ENCODE measurements at regions of chr5 and their contacts with region 1.

Region 1: GRCh38 chr5:107673368-107674136 is 2.8 kb upstream of the EFNA5 start:
- DNase-seq: peak; percentile 90 to 95
- H3K4me3 ChIP-seq: peak overlapping the region; percentile 41
- H3K4me1 ChIP-seq: peaks cover 5% of the 10 kb centered on the region
- H3K27me3 ChIP-seq: no peaks in the 10 kb centered on the region

Region 2: GRCh38 chr5:107248066-107248695 is 425.4 kb before region 1 on chr5:
- in situ Hi-C with region 1: loop called (anchors 25 kb)
- DNase-seq: peak; percentile 43 to 87
- H3K4me3 ChIP-seq: no peak overlapping the region
- H3K4me1 ChIP-seq: peaks cover 1% of the 10 kb centered on the region
- H3K27me3 ChIP-seq: no peaks in the 10 kb centered on the region

Region 3: DNA sequence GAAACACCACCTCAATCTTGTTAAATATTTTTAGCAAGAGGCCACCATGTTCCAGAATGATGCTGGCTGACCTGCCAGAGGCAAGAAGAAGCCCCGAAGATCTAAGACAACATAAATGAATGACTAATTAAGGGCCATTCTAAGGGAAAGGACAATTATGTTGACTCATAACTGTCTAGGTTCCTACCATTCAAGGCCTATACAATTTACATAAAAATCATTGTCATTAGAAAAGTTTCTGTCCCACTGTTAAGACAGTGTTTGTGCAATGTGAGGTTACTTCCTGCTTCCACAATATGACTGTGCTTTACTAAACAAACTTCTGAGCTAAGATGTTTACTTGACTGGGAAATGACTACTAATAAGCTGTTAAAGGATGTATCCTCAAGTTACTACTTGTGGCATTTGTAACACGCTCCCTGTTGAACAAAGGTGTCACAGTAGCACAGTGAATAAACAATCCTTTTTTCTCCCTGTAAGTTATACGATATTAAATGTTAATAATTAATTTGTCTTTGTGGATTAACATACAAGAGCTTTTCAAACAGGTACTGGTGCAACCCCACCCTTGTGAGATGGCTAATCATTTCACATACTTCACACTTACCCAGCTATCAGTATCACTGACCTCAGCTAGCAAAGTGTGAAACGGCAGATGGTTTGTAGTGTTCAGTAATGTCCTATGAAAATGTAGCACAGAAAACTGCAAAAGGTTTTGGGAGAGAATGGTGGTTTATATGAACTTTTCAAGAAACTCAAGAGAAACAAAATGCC is 198.6 kb before region 1 on chr5:
- in situ Hi-C with region 1: loop called (anchors 25 kb)
- DNase-seq: no peak
- H3K4me3 ChIP-seq: no peak overlapping the region
- H3K4me1 ChIP-seq: peaks cover 37% of the 10 kb centered on the region
- H3K27me3 ChIP-seq: no peaks in the 10 kb centered on the region